ENCODE measurements at regions of chr14 and their contacts with region 1.

Region 1: DNA sequence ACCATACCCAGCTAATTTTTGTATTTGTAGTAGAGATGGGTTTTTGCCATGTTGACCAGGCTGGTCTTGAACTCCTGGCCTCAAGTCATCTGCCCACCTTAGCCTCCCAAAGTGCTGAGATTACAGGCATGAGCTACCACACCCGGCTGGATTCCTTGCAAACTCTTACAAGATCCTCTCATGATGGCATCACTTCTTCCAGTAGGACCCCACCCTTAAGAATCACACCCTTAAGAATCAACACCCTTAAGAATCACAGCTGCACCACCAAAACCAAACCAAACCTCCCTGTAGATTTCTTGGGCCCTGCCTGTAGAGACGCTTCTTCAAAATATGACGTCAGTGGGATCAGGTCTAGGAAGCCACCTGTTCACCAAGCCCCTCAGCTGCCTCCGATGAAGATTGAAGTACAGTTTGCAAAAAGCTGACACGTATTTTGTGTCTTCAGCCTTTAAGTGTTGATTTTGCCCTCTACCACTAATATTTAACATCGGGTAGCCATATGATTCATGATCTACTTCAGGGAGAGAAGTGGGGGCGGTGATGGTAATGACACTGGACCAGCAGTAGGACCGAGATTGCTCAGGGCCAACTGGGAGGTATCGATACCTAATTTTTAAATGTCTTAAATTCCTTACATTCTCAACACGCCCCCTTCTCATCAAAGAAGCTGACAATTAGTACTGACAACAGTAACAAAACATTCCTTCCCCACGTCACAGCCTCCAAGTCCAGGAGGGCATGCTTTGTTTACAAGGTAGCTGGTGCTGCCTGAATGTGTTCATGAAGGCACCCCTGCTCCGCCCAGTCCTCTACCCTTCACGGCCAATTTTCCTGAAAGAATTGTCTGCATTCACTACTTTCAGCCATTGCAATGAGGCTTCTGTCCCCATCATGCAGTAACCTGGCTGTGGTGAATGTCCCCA is 57.2 kb downstream of the ESRRB start:
- DNase-seq: no peak
- ATAC-seq: no peak
- H3K4me3 ChIP-seq: no peak overlapping the region
- H3K4me3 Mint-ChIP-seq: no peak overlapping the region
- H3K27ac ChIP-seq: no peak overlapping the region
- H3K27ac Mint-ChIP-seq: no peak overlapping the region
- H3K4me1 ChIP-seq: no peaks in the 10 kb centered on the region
- H3K4me1 Mint-ChIP-seq: no peaks in the 10 kb centered on the region
- H3K27me3 ChIP-seq: peaks cover 0 to 21% of the 10 kb centered on the region in 2 experiments
- H3K27me3 Mint-ChIP-seq: peaks cover 17 to 36% of the 10 kb centered on the region in 2 donors

Region 2: GRCh38 chr14:77212943-77213678 is 780.0 kb after region 1 on chr14:
- CTCF ChIA-PET with region 1: no interaction called
- POLR2A ChIA-PET with region 1: interaction called in 1 of 2 experiments, 10 read pairs
- DNase-seq: peak in 4 of 35 experiments; percentile 3 to 23 (median 6)
- ATAC-seq: peak in 1 of 4 experiments; percentile 37
- H3K4me3 ChIP-seq: no peak overlapping the region
- H3K4me3 Mint-ChIP-seq: no peak overlapping the region
- H3K27ac ChIP-seq: no peak overlapping the region
- H3K27ac Mint-ChIP-seq: no peak overlapping the region
- H3K4me1 ChIP-seq: peaks cover 0 to 3% of the 10 kb centered on the region in 2 experiments
- H3K4me1 Mint-ChIP-seq: peaks cover 0 to 3% (median 2%) of the 10 kb centered on the region in 3 donors
- H3K27me3 ChIP-seq: peaks cover 0 to 9% of the 10 kb centered on the region in 2 experiments
- H3K27me3 Mint-ChIP-seq: peaks cover 25 to 29% of the 10 kb centered on the region in 2 donors

Measured in T-cell (primary cell).